ENCODE measurements at regions of chr1 and their contacts with region 1.

Region 1: DNA sequence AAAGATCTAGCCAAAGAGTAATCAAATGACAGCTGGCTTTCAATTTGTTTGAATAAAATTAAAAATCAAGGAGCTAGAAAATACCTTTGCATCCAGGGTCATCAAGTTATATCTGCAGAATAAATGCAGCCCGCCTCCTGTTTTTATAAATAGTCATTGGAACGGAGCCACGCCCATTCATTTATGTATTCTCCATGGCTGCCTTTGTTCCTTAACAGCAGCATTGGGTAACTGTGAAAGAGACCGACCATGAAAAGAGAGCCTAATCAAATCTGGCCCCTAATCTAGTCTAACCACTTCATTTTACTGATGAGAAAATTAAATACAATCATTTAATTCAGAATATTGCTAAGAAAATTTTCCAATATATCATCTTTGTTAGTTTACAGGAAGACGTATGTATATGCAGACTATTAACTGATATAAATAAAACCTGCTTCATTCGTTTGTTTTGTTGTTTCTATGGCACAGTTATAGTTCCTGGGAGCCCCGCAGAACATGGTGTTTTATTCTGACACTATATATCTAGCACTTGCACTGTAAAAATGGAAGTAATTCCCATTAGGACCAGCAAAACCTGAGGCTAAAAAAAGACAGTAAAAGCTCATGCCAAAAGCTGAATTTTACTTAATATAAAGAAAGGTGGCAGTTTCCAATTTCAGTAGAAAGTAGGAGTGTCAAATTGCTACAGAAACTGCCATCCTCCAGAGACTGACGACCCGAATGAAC is 111.8 kb upstream of the PALMD start:
- DNase-seq: no peak
- ATAC-seq: peak; percentile 70

Region 2: DNA sequence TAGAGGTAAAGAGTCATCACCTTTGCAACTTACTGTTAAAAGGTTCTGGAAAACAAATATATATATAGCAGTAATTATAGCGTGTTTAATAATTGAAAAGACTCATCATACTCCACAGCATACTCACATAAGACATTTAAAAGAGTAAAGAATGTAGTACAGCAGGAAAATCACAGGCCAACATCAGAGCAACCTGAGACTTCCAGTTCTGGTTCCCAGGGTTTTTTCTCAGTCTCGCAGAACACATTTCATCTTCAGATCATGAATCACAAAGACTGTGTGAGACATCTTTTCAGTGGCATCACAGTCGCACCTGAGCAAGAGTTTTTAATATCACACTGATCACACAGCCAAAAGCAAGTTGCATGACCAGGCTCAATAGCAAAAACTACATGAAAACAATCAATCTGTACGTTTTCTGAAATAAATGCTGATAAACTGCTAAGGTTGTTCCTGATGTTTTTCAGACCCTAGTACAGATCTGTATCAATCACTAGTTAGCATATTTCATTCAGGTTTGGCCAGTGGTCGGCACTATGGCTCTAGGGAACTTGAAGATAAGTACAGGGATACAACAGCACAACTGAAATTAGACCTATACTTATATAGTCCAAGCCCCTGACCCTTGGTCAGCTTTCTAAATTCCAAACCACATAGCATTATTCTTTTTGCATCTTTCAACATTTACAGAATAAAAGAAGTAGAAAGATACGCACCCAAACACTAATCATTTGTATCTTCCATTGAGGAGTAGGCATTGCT is 127.2 kb before region 1 on chr1:
- intact Hi-C with region 1: no loop called
- DNase-seq: no peak
- ATAC-seq: no peak

Region 3: DNA sequence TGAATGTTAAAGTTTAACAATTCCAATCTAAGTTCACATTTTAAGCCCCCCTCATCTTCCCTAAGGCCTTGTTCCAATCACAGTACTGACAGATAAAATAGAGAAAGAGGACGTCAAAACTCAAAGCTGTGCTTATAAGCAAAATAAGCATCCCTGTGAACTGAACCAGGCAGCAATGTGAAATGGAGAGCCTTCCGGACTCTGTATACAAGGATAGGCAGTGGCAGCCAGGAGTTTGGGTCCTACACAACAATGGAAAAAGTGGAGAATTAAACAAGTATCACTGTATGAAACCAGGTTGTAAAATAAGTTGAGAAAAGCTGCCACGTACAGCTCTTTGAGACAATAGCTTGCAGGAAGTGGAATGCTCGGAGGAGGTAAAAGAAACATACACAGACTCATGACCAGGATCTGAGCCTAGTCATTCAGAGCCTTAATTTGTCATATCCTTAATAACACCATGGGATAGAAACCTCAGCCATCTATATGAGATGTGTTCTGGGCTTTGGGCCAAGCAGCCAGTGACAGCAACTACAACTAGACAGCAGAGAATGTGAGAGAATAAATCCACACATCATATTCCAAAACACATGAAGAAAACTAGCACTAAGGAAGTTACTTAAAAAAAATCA is 56.6 kb after region 1 on chr1:
- intact Hi-C with region 1: no loop called
- DNase-seq: peak; percentile 53
- ATAC-seq: peak; percentile 87

Region 4: DNA sequence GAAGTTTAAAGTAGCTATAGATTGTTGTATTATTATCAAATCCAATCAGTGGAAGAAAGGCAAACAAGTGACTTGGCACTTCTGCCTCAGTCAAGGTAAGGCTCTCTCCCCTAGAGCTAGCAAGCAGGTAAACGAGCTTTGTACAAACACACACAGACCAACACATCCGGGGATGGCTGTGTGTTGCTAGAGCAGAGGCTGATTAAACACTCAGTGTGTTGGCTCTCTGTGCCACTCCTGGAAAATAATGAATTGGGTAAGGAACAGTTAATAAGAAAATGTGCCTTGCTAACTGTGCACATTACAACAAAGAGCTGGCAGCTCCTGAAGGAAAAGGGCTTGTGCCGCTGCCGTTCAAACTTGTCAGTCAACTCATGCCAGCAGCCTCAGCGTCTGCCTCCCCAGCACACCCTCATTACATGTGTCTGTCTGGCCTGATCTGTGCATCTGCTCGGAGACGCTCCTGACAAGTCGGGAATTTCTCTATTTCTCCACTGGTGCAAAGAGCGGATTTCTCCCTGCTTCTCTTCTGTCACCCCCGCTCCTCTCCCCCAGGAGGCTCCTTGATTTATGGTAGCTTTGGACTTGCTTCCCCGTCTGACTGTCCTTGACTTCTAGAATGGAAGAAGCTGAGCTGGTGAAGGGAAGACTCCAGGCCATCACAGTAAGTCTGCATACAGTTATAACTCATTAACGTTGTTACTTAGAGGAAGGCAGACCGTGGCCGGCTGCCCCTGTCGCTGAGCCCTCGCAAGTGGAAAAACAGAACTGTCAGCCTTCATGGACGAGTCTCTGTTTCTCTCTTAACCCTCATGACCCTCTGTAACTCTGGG is 111.8 kb after region 1 on chr1 and contains the start of gene PALMD:
- intact Hi-C with region 1: loop called (anchors 10 kb)
- DNase-seq: peak; percentile 65
- ATAC-seq: peak; percentile 76
- total RNA-seq, gene PALMD: 115 TPM

Measured in left ventricle myocardium superior (tissue), 1 donor.